B cell (primary cell): ENCODE measurements at regions of chr13 and their contacts with region 1.

Region 1: DNA sequence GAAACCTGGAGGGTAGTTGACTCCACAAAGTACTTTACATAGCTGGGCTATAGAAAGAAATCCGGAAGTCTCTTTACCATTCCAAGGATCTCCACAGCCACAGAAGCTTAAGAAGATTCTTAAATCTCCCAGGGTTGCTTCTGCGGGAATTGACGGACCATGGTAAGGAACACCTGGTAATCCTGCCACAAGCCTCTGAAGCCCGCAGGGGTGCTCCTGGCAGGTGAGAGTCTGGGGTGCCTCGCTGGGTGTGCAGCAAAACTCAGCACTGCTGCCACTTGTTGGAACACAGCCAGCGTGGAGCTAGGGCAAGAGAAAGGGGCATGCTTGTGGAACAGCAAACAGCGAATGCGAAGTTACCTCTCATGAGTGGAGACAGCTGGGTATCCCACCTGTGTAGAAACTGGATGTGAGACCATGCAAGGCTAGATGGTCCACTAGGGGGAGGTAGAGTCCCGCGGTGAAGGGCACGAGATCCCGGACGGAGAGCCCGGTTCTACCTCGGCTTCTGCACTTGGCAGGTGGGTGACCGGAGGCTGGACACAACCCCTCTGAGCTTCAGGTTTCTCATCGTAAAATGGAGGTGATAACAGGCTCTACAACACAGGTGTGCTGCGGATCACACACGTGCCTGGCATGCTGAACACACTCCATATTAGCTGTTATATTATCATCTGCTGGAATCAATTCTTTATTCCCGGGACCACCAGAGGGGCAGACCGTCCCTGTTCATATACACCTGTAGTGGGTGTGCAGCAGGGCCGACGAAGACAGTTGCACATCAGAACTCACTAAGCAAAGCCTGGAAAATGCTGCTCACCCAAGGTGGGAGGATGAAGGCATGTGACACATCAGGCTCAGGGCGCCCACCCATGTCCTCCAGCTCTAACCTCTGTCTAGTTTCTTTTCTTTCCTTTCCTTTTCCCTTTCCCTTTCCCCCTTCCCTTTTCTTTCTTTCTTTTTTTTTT is 24.1 kb upstream of the UBAC2 start:
- DNase-seq: peak; percentile 88
- ATAC-seq: peak; percentile 84
- H3K4me3 ChIP-seq: no peak overlapping the region
- H3K4me3 Mint-ChIP-seq: peak overlapping the region; percentile 58
- H3K27ac ChIP-seq: no peak overlapping the region
- H3K27ac Mint-ChIP-seq: peak overlapping the region; percentile 72
- H3K4me1 ChIP-seq: peaks cover 37 to 43% of the 10 kb centered on the region in 2 donors
- H3K4me1 Mint-ChIP-seq: peaks cover 39% of the 10 kb centered on the region
- H3K27me3 ChIP-seq: no peaks in the 10 kb centered on the region
- H3K27me3 Mint-ChIP-seq: no peaks in the 10 kb centered on the region
- CTCF ChIP-seq: peak; percentile 96

Region 2: DNA sequence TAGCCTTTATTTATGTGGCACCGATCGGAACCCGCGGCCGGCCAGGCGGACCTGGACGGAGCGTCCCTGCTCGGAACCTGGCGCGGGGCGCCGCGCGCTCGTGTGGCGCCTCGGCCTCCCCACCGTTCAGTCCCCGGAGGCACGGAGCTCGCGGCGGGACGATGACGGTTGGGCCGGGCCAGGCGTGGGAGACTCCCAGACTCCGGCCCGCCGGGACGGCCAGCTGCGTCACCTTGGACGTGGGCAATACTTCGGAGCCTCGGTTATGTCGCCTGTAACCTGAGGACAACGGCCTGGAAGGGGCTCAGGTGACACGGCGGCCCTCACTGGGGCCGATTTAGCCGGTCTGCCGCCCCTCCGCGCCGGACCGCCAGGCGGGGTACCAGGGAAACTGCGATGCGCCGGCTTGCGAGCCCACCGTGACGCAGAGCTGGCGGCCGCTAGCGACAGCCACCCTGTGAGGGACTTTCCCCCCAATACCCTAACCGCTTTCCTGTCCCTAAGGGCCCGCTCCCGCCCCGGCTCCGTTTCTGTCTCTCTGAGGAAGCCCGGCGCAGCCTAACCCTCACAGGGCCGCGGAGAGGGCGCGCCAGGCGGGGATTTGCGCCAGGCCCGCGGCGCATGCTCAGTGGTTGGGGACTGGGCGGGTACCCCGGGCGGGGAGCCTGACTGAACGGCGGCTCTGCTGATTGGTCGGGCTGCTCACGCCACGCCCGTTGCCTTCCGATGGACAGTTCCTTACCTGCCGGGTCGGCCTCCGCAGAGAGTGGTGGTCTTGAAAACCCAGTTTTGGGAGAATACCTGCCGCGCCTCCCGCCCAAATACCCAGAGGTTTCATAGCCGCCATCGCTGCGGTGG is 89.3 kb before region 1 on chr13:
- CTCF ChIA-PET with region 1: interaction called, 5 read pairs
- POLR2A ChIA-PET with region 1: no interaction called
- intact Hi-C with region 1: loop called (anchors 2 kb)
- DNase-seq: peak; percentile 94
- ATAC-seq: peak; percentile 74
- H3K4me3 ChIP-seq: peak overlapping the region; percentile 65 to 89 (median 88)
- H3K4me3 Mint-ChIP-seq: peak overlapping the region; percentile 100
- H3K27ac ChIP-seq: peak overlapping the region; percentile 82 to 92
- H3K27ac Mint-ChIP-seq: peak overlapping the region; percentile 99
- H3K4me1 ChIP-seq: peaks cover 26 to 27% of the 10 kb centered on the region in 2 donors
- H3K4me1 Mint-ChIP-seq: peaks cover 32% of the 10 kb centered on the region
- H3K27me3 ChIP-seq: peaks cover 0 to 3% (median 0%) of the 10 kb centered on the region in 4 experiments
- H3K27me3 Mint-ChIP-seq: peaks cover 5% of the 10 kb centered on the region
- CTCF ChIP-seq: peak; percentile 42

Region 3: DNA sequence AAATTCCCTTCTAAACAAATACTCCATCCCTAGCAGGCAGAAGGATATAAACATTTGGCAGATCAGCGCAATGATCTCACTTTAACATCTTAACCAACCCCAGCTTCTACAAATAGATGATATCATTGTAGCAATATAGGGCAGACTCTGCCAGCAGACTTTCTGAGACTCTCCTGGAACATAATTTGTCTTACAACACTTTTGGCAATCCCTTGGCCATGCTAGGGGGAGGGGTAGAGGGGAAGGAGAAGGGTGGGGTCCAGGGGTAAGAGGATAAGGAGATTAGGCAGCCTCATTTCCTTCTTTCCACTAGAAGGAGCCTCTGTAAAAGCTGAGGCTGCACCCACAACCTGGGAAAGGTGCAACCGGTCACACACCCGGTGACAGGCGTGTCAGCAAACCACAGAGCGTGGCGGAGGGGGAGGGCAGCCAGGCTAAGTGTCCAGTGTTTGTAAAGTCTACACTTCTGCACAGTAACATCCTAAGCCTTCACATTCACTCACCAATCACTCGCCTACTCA is 15.3 kb after region 1 on chr13:
- CTCF ChIA-PET with region 1: interaction called, 24 read pairs
- POLR2A ChIA-PET with region 1: no interaction called
- intact Hi-C with region 1: loop called (anchors 2 kb)
- DNase-seq: no peak
- ATAC-seq: no peak
- H3K4me3 ChIP-seq: no peak overlapping the region
- H3K4me3 Mint-ChIP-seq: no peak overlapping the region
- H3K27ac ChIP-seq: no peak overlapping the region
- H3K27ac Mint-ChIP-seq: no peak overlapping the region
- H3K4me1 ChIP-seq: peaks cover 4 to 14% of the 10 kb centered on the region in 2 donors
- H3K4me1 Mint-ChIP-seq: peaks cover 21% of the 10 kb centered on the region
- H3K27me3 ChIP-seq: no peaks in the 10 kb centered on the region
- H3K27me3 Mint-ChIP-seq: no peaks in the 10 kb centered on the region
- CTCF ChIP-seq: no peak

Region 4: DNA sequence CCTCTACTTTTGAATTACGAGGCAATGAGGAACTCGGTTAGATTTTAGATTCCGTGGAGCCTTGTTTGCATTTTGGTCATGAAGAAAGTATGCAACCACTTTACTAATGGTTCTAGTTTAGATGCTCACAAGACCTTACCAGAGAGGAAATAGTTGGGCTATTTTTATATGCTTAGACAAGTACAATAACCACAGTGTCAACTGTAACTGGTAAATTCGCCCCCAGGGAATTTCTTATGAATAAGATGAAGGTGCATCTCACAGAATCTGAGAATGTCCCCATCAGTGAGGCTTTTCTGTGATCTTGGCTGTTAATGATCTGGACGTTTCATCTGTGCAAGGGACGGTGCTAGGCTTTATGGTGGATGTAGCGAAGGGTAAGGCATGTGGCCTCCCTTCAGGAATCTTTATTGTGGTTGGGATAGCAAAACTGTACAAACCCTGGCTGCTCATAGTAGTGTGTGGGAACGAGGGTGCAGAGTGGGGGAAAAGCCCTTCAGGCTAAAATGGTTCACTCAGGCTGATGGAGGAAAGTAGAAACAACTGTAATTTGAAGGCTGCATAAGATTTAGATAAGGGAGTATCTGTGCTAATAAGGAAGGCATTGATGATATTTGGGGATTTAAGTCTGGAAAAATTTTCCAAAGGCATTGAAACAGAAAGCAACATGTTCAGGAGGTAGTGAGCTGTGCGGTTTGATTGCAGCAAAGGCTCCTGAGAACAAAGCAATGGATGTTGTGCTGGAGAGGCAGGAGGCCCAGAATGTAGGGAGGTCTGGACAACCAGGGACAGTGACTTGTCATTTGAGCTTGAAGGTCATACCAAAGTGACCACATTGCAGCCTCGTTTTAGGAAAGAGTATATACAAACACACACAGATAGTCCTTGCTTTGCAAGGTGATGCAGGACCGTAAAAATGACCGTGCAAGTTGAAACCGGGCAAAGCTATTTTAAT is 52.4 kb after region 1 on chr13:
- CTCF ChIA-PET with region 1: interaction called, 16 read pairs
- POLR2A ChIA-PET with region 1: no interaction called
- intact Hi-C with region 1: loop called (anchors 2 kb)
- DNase-seq: peak; percentile 87
- ATAC-seq: peak; percentile 79
- H3K4me3 ChIP-seq: peak overlapping the region; percentile 16 to 56 (median 49)
- H3K4me3 Mint-ChIP-seq: peak overlapping the region; percentile 86
- H3K27ac ChIP-seq: peak overlapping the region; percentile 65 to 74
- H3K27ac Mint-ChIP-seq: peak overlapping the region; percentile 80
- H3K4me1 ChIP-seq: peaks cover 84 to 86% of the 10 kb centered on the region in 2 donors
- H3K4me1 Mint-ChIP-seq: peaks cover 77% of the 10 kb centered on the region
- H3K27me3 ChIP-seq: no peaks in the 10 kb centered on the region
- H3K27me3 Mint-ChIP-seq: no peaks in the 10 kb centered on the region
- CTCF ChIP-seq: no peak

Region 5: DNA sequence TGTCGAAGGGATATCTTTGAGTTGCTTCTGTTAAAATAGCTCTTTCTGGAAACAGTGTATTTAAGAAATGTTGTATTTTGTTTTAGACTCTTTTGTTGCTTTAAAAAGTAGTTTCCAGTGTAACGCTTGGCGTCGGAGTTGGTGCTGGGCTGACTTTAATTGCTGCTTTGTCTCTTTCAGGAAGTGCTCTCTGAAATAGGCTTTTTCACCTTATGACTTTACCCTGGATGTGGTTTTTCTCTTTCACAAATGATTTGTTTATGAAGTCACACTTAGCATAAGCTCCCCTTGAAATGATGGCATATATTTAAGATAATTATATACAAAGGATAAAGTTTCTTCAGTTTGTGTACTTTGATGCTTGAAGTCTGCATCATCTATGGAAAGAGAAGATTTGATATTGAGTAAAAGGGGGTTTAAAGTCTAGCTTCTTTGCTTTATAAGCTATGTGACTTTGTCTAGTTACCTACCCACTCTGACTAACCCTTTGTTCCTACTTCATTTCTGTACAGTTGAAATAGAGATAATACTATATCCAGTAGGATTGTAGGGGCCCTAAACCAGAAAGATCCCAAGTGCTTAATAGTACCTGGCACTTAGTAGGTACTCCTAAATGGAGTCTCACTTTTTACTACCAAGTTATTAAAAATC is 81.7 kb after region 1 on chr13 and contains the start of gene GPR18:
- CTCF ChIA-PET with region 1: interaction called, 661 read pairs
- POLR2A ChIA-PET with region 1: interaction called, 4 read pairs
- intact Hi-C with region 1: no loop called
- DNase-seq: peak; percentile 75
- ATAC-seq: peak; percentile 66
- H3K4me3 ChIP-seq: peak within 1 kb of the TSS; percentile 60 to 98 (median 79)
- H3K4me3 Mint-ChIP-seq: peak within 1 kb of the TSS; percentile 98
- H3K27ac ChIP-seq: peak within 1 kb of the TSS; percentile 86 to 90
- H3K27ac Mint-ChIP-seq: peak within 1 kb of the TSS; percentile 96
- H3K4me1 ChIP-seq: peaks cover 57 to 68% of the 10 kb centered on the region in 2 donors
- H3K4me1 Mint-ChIP-seq: peaks cover 81% of the 10 kb centered on the region
- H3K27me3 ChIP-seq: no peaks in the 10 kb centered on the region
- H3K27me3 Mint-ChIP-seq: no peaks in the 10 kb centered on the region
- CTCF ChIP-seq: no peak
- total RNA-seq, gene GPR18: 17.6 and 19.1 TPM in 2 replicates

Region 6: DNA sequence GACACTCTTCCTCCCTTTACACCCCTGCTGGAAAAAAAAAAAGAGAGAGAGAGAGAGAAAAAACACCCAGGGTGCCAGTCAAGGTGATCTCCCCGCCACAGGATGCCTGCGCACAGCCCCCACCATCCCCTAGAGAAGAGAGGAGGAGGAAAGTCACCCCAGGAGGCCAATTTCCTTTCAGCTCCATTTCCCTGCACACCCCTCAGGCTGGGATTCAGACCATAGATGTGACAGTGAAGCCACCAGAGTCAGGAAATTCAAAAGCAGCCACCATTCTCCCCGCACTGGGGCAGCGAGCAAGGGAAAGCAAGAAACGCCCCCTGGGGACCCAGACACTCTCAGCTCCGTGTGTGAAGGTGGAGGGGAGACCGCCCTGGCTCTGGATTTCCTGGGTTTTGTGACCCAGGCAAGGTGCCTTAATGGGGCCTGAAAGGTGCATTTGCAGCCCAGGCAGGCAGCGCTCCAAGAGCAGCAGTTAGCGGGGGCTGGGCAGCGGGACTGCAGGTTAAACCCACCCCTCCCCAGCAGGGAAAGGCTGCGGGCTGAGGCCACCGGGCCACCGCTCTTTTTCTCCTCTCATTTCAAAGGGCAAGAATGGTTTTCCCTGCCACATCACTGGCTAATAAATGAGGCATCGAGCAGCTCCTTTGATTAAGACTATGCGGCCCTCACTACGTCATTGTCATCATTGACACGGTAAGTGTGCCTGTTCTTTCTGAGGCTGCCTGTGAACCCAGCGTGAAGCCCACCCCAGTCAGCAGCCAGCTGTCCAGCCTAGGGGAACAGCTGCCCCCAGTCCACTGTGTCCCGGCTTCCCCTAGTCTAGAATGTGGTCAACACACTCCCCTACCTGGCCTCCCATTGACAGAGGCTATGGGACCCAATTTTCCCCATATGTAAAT is 240.9 kb after region 1 on chr13:
- CTCF ChIA-PET with region 1: interaction called, 10 read pairs
- POLR2A ChIA-PET with region 1: no interaction called
- intact Hi-C with region 1: no loop called
- DNase-seq: no peak
- ATAC-seq: no peak
- H3K4me3 ChIP-seq: no peak overlapping the region
- H3K4me3 Mint-ChIP-seq: no peak overlapping the region
- H3K27ac ChIP-seq: no peak overlapping the region
- H3K27ac Mint-ChIP-seq: peak overlapping the region; percentile 67
- H3K4me1 ChIP-seq: peaks cover 51 to 58% of the 10 kb centered on the region in 2 donors
- H3K4me1 Mint-ChIP-seq: peaks cover 48% of the 10 kb centered on the region
- H3K27me3 ChIP-seq: peaks cover 0 to 3% (median 0%) of the 10 kb centered on the region in 4 experiments
- H3K27me3 Mint-ChIP-seq: no peaks in the 10 kb centered on the region
- CTCF ChIP-seq: no peak

Region 7: GRCh38 chr13:100514788-100515409 is 1338.3 kb after region 1 on chr13:
- CTCF ChIA-PET with region 1: interaction called, 11 read pairs
- POLR2A ChIA-PET with region 1: no interaction called
- intact Hi-C with region 1: loop called (anchors 10 kb)
- DNase-seq: peak; percentile 74
- ATAC-seq: peak; percentile 84
- H3K4me3 ChIP-seq: no peak overlapping the region
- H3K4me3 Mint-ChIP-seq: no peak overlapping the region
- H3K27ac ChIP-seq: no peak overlapping the region
- H3K27ac Mint-ChIP-seq: no peak overlapping the region
- H3K4me1 ChIP-seq: no peaks in the 10 kb centered on the region
- H3K4me1 Mint-ChIP-seq: peaks cover 3% of the 10 kb centered on the region
- H3K27me3 ChIP-seq: no peaks in the 10 kb centered on the region
- H3K27me3 Mint-ChIP-seq: no peaks in the 10 kb centered on the region
- CTCF ChIP-seq: peak; percentile 95